ENCODE measurements at regions of chr3 and their contacts with region 1.

Region 1: GRCh38 chr3:150396956-150397550 is 11.0 kb upstream of the TSC22D2 start:
- DNase-seq: no peak
- ATAC-seq: no peak
- H3K4me3 ChIP-seq: no peak overlapping the region
- H3K4me3 Mint-ChIP-seq: no peak overlapping the region
- H3K27ac ChIP-seq: no peak overlapping the region
- H3K27ac Mint-ChIP-seq: no peak overlapping the region
- H3K4me1 ChIP-seq: no peaks in the 10 kb centered on the region
- H3K4me1 Mint-ChIP-seq: no peaks in the 10 kb centered on the region
- H3K27me3 ChIP-seq: no peaks in the 10 kb centered on the region
- H3K27me3 Mint-ChIP-seq: peaks cover 7 to 10% of the 10 kb centered on the region in 2 donors

Region 2: DNA sequence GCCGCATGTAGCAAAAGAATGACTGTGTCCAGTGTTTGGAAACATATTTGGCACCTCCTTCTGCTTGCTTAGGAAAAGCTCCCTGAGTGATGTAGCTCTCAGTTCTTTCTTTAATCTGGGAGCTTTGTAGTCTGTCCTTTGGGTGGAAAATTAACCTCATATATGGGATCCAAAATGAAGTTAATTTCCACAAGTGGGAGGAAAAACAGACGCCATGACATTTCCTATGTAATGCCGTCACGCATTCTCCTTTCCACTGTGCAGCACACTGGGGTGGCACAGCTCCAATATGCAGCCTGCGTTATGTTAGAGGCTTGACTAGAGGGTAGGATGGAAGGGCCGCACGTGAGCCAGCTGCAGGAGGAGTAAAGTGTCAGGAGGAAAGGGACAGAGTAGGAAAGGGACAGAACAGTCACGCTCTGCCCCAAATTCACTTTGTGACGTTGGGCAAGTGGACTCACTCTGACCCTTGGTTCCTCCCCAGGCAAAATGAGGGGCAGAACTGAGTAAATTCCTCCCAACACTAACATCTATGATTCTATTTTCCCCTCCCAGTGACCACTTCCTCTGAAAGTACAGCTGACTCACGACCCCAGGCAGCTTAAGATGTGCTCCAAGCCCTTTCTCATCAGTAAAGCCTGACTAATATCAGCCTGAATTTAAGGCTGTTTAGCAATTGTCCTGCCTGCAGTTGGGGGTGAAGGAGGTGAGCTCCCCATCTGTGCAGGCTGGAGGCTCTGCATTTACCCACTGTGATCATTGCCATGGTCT is 249.9 kb before region 1 on chr3:
- CTCF ChIA-PET with region 1: no interaction called
- POLR2A ChIA-PET with region 1: no interaction called
- DNase-seq: no peak
- ATAC-seq: no peak
- H3K4me3 ChIP-seq: no peak overlapping the region
- H3K4me3 Mint-ChIP-seq: no peak overlapping the region
- H3K27ac ChIP-seq: no peak overlapping the region
- H3K27ac Mint-ChIP-seq: no peak overlapping the region
- H3K4me1 ChIP-seq: no peaks in the 10 kb centered on the region
- H3K4me1 Mint-ChIP-seq: no peaks in the 10 kb centered on the region
- H3K27me3 ChIP-seq: no peaks in the 10 kb centered on the region
- H3K27me3 Mint-ChIP-seq: peaks cover 18 to 29% of the 10 kb centered on the region in 2 donors

Region 3: DNA sequence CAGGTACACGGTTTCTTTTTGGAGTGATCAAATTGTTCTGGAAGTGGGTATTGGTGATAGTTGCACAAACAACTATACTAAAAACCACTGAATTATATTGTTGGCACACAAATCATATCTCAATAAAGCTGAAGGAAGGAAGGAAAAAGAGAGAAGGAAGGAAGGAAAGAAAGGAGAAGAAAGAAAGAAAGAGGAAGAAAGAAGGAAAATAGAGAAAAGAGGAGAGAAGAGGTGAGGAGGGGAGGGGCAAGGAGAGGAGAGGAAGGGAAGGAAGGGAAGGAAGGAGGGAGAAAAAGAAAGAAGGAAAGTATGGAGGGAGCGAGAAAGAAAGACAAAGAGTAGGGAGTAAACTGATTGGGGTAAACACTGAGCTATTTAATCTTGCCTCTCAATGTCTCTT is 66.9 kb before region 1 on chr3:
- CTCF ChIA-PET with region 1: no interaction called
- POLR2A ChIA-PET with region 1: interaction called in 1 of 2 experiments, 16 read pairs
- DNase-seq: no peak
- ATAC-seq: no peak
- H3K4me3 ChIP-seq: no peak overlapping the region
- H3K4me3 Mint-ChIP-seq: no peak overlapping the region
- H3K27ac ChIP-seq: no peak overlapping the region
- H3K27ac Mint-ChIP-seq: no peak overlapping the region
- H3K4me1 ChIP-seq: no peaks in the 10 kb centered on the region
- H3K4me1 Mint-ChIP-seq: no peaks in the 10 kb centered on the region
- H3K27me3 ChIP-seq: peaks cover 0 to 3% of the 10 kb centered on the region in 2 experiments
- H3K27me3 Mint-ChIP-seq: peaks cover 10 to 11% of the 10 kb centered on the region in 2 donors

Measured in T-cell (primary cell).